ENCODE measurements at regions of chr10 and their contacts with region 1.

Region 1: GRCh38 chr10:102660888-102661657 is 16.8 kb downstream of the TRIM8 start:
- DNase-seq: peak; percentile 65
- H3K4me3 Mint-ChIP-seq: peak overlapping the region; percentile 62
- H3K27ac Mint-ChIP-seq: peak overlapping the region; percentile 88
- H3K4me1 Mint-ChIP-seq: peaks cover 39% of the 10 kb centered on the region
- H3K27me3 Mint-ChIP-seq: peaks cover 2% of the 10 kb centered on the region

Region 2: DNA sequence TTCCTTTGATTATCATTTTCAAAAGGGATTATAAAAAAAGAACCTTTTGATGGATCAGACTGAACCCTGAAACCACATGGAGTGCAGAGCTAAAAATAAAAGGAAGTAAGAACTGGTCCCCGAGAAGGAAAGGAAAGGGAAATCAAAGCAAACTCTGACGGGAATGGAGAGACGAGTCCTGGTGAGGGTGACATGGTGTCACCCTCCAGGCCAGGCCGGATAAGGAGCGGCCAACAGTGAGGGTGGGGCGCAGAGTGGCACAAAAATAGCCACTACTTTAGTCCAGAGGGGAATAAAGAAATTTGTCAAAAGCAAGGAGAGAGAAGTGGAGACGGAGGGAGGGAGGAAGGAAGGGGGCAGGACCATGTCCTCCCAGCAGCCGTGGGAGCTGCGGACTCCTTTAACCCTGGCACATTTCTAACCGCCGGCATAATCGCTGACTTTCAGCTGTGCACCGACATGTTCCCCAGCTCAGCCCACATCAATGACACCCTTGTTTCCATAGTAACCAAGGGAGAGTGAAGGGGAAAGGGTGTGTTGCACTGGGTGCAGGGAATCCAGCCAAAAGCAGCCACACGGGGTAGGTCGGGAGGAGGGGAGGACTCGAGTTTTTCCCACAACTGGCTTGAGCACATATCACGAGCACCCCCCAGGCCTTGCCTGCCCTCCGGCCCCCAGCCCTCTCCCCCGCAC is 12.9 kb after region 1 on chr10:
- intact Hi-C with region 1: loop called (anchors 1 kb)
- DNase-seq: peak; percentile 69
- H3K4me3 Mint-ChIP-seq: peak overlapping the region; percentile 71
- H3K27ac Mint-ChIP-seq: peak overlapping the region; percentile 69
- H3K4me1 Mint-ChIP-seq: peaks cover 25% of the 10 kb centered on the region
- H3K27me3 Mint-ChIP-seq: no peaks in the 10 kb centered on the region